Activated CD4-positive, alpha-beta memory T cell treated with anti-CD3 and anti-CD28 coated beads for 36 hours (primary cell): ENCODE measurements at regions of chr7 and their contacts with region 1.

Region 1: DNA sequence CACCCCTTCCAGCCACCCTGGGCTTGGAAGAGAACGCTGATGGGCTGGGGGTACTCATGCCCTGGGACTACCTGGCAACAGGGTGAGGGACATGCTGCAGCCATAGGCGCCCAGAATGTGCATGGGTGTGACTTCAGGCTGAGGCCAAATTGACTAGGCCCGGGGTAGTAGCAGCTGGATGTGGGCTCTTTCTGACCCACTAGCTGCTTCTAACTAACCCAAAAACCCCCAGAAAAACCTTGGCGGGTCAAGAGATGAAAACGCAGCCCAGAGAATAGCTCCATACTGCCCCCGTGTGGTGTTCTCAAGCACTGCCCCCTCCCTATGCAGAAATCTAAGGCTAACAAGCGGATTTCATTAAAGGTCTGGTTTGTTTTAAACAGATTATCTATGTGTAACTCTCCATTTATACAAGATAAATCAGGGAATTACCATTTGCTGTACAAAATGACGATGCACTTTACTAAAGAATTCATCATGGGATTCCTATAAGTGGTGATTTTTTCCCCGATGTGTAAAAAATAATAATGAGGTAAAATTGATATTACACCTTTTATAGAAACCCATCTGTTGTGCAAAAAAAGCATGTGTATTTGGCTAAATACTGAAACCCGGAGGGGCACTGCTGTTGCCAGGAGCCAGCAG is 4.2 kb downstream of the SMARCD3 start:
- DNase-seq: peak; percentile 78
- H3K4me3 Mint-ChIP-seq: peak overlapping the region; percentile 38
- H3K27ac Mint-ChIP-seq: no peak overlapping the region
- H3K4me1 Mint-ChIP-seq: peaks cover 37% of the 10 kb centered on the region
- H3K27me3 Mint-ChIP-seq: peaks cover 27% of the 10 kb centered on the region

Region 2: DNA sequence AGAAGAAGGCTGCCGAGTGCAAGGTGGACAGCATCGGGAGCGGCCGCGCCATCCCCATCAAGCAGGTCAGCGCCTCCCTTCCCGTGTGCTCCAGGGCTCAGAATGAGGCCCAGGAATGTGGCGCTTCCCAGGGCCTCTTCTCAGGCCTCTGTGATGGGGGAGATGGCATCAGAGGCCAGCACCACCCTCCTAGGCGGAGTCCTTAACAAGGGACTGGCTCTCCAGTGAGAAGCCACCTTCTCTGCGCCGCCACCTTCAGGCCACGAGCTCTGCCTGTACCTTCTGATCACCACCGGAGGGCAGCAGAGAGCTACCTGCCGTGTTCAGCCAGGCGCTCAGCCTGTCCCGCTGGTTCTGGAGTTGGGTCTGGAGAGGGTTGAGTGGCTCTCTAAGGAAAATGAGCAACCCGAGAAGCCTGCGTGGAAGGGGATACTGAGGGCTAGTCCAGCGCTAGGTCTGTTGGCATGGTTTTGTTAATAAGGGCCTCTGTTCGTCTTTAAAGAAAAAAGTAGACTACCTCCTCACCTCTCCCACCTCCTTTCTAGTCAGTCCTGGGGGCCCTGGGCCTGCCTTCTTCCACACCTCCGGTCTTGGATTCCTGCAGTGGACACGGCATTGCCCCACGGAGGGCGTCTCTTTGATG is 120.4 kb before region 1 on chr7:
- CTCF ChIA-PET with region 1: interaction called, 19 read pairs
- POLR2A ChIA-PET with region 1: no interaction called
- intact Hi-C with region 1: loop called (anchors 2 kb)
- DNase-seq: peak; percentile 85
- H3K4me3 Mint-ChIP-seq: no peak overlapping the region
- H3K27ac Mint-ChIP-seq: no peak overlapping the region
- H3K4me1 Mint-ChIP-seq: no peaks in the 10 kb centered on the region
- H3K27me3 Mint-ChIP-seq: no peaks in the 10 kb centered on the region

Region 3: GRCh38 chr7:151172273-151173141 is 71.8 kb before region 1 on chr7:
- CTCF ChIA-PET with region 1: interaction called, 5 read pairs
- POLR2A ChIA-PET with region 1: no interaction called
- intact Hi-C with region 1: loop called (anchors 1 kb)
- DNase-seq: peak; percentile 85
- H3K4me3 Mint-ChIP-seq: no peak overlapping the region
- H3K27ac Mint-ChIP-seq: no peak overlapping the region
- H3K4me1 Mint-ChIP-seq: peaks cover 9% of the 10 kb centered on the region
- H3K27me3 Mint-ChIP-seq: peaks cover 44% of the 10 kb centered on the region

Region 4: GRCh38 chr7:151206914-151207313 is 37.4 kb before region 1 on chr7:
- CTCF ChIA-PET with region 1: interaction called, 4 read pairs
- POLR2A ChIA-PET with region 1: no interaction called
- intact Hi-C with region 1: loop called (anchors 2 kb)
- DNase-seq: no peak
- H3K4me3 Mint-ChIP-seq: no peak overlapping the region
- H3K27ac Mint-ChIP-seq: no peak overlapping the region
- H3K4me1 Mint-ChIP-seq: peaks cover 26% of the 10 kb centered on the region
- H3K27me3 Mint-ChIP-seq: no peaks in the 10 kb centered on the region

Region 5: GRCh38 chr7:151232091-151232916 is 12.0 kb before region 1 on chr7 and contains the start of gene CHPF2:
- CTCF ChIA-PET with region 1: interaction called, 62 read pairs
- POLR2A ChIA-PET with region 1: interaction called, 19 read pairs
- intact Hi-C with region 1: loop called (anchors 1 kb)
- DNase-seq: peak; percentile 95
- H3K4me3 Mint-ChIP-seq: peak within 1 kb of the TSS; percentile 100
- H3K27ac Mint-ChIP-seq: peak within 1 kb of the TSS; percentile 99
- H3K4me1 Mint-ChIP-seq: peaks cover 38% of the 10 kb centered on the region
- H3K27me3 Mint-ChIP-seq: no peaks in the 10 kb centered on the region
- total RNA-seq, gene CHPF2: 33.6 to 34.2 TPM

Region 6: GRCh38 chr7:151256410-151257045 is 12.2 kb after region 1 on chr7:
- CTCF ChIA-PET with region 1: interaction called, 21 read pairs
- POLR2A ChIA-PET with region 1: interaction called, 5 read pairs
- intact Hi-C with region 1: no loop called
- DNase-seq: no peak
- H3K4me3 Mint-ChIP-seq: no peak overlapping the region
- H3K27ac Mint-ChIP-seq: no peak overlapping the region
- H3K4me1 Mint-ChIP-seq: no peaks in the 10 kb centered on the region
- H3K27me3 Mint-ChIP-seq: peaks cover 39% of the 10 kb centered on the region

Region 7: DNA sequence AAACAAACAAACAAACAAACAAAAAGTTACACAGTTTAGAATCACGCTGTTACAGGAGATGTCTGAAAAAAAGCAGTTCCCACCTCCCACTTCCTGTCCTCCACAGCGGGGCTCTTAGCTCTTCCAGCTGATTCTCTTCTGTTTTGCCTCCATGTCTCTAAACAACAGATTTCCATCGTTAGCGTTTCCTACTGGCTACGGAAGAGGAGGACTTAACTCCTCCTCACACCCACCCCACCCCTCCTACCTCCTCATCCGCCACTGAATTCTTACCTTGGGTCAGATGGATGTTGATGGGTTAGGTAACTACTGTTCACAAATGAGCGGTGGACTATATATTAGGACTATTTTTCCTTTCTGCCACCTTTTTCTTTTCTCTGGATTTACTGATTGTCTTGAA is 60.5 kb after region 1 on chr7:
- CTCF ChIA-PET with region 1: interaction called, 20 read pairs
- POLR2A ChIA-PET with region 1: no interaction called
- intact Hi-C with region 1: loop called (anchors 1 kb)
- DNase-seq: no peak
- H3K4me3 Mint-ChIP-seq: peak overlapping the region; percentile 34
- H3K27ac Mint-ChIP-seq: no peak overlapping the region
- H3K4me1 Mint-ChIP-seq: peaks cover 9% of the 10 kb centered on the region
- H3K27me3 Mint-ChIP-seq: peaks cover 20% of the 10 kb centered on the region

Region 8: GRCh38 chr7:151462306-151462779 is 218.0 kb after region 1 on chr7:
- CTCF ChIA-PET with region 1: no interaction called
- POLR2A ChIA-PET with region 1: no interaction called
- intact Hi-C with region 1: no loop called
- DNase-seq: no peak
- H3K4me3 Mint-ChIP-seq: no peak overlapping the region
- H3K27ac Mint-ChIP-seq: no peak overlapping the region
- H3K4me1 Mint-ChIP-seq: peaks cover 2% of the 10 kb centered on the region
- H3K27me3 Mint-ChIP-seq: peaks cover 4% of the 10 kb centered on the region